ENCODE measurements at regions of chr11 and their contacts with region 1.

Region 1: GRCh38 chr11:82775736-82776346 is 42.2 kb upstream of the FAM181B start:
- H3K4me3 ChIP-seq: no peak overlapping the region
- H3K27ac ChIP-seq: no peak overlapping the region
- H3K4me1 ChIP-seq: no peaks in the 10 kb centered on the region
- CTCF ChIP-seq: no peak

Region 2: GRCh38 chr11:82653752-82654151 is 122.1 kb before region 1 on chr11:
- CTCF ChIA-PET with region 1: no interaction called
- POLR2A ChIA-PET with region 1: no interaction called
- H3K4me3 ChIP-seq: no peak overlapping the region
- H3K27ac ChIP-seq: no peak overlapping the region
- H3K4me1 ChIP-seq: no peaks in the 10 kb centered on the region
- CTCF ChIP-seq: no peak

Region 3: DNA sequence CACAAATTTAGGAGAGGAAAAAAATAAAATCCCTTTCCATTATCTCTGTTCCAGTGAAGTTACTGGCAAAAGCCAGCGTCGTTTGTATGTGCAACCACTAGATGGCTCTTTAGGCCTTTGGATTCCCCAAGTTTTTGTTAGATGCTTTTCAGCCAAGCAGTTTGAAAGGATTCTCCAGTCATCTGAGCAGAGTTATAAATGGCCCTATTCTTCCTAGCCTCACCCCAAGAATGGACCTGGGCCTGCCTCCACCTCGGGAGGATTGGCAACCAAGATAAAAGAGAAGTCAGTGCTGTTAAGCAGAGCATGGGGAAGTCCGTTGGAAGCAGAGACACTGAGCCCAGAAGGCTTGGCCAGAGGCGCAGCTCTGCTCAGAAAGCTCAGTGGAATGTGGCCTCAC is 57.5 kb before region 1 on chr11:
- CTCF ChIA-PET with region 1: interaction called, 10 read pairs
- POLR2A ChIA-PET with region 1: no interaction called
- H3K4me3 ChIP-seq: no peak overlapping the region
- H3K27ac ChIP-seq: no peak overlapping the region
- H3K4me1 ChIP-seq: no peaks in the 10 kb centered on the region
- CTCF ChIP-seq: no peak

Region 4: DNA sequence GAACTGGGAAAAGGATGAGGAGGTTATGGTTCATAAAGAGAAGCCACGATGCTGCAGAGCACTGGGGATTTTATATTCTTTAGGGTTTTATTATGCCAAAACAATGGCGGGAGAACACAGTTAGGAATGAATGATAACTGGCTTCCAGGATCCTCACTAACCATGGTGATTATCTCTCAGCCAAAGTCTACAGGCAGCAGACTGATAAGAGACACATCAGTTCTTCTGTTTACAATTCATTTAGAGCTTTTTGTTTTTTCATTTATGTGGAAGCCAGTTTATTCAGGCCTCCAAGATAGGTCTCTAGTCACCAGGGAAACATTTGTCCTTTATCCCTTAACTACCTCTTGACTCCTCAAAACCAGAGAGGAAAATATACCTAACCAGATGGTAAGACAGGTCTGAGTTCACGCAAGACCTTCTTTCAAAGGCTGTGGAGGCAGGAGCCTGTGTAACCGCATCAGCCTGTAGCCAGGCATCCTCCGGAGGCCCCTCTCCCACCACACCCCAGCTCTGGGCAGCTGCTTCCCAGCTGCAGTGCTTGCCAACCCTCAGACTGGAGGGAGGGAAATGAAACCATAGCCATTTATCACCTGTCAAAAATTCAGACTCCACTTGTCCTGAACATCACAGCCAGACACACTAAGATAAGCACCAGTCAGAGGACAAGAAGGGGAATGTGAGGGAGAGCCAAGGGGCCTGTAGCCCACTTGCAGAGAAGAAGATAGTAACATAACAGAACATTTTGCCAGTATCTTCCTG is 15.1 kb after region 1 on chr11:
- CTCF ChIA-PET with region 1: interaction called, 47 read pairs
- POLR2A ChIA-PET with region 1: no interaction called
- H3K4me3 ChIP-seq: no peak overlapping the region
- H3K27ac ChIP-seq: no peak overlapping the region
- H3K4me1 ChIP-seq: no peaks in the 10 kb centered on the region
- CTCF ChIP-seq: no peak

Region 5: GRCh38 chr11:82802710-82803109 is 26.9 kb after region 1 on chr11:
- CTCF ChIA-PET with region 1: interaction called, 11 read pairs
- POLR2A ChIA-PET with region 1: no interaction called
- H3K4me3 ChIP-seq: no peak overlapping the region
- H3K27ac ChIP-seq: no peak overlapping the region
- H3K4me1 ChIP-seq: no peaks in the 10 kb centered on the region
- CTCF ChIP-seq: no peak

Region 6: GRCh38 chr11:82858556-82859091 is 82.8 kb after region 1 on chr11:
- CTCF ChIA-PET with region 1: interaction called, 15 read pairs
- POLR2A ChIA-PET with region 1: no interaction called
- H3K4me3 ChIP-seq: no peak overlapping the region
- H3K27ac ChIP-seq: no peak overlapping the region
- H3K4me1 ChIP-seq: peaks cover 2% of the 10 kb centered on the region; the same call in 1 of the 2 replicates
- CTCF ChIP-seq: no peak

Region 7: GRCh38 chr11:82867495-82868082 is 91.7 kb after region 1 on chr11:
- CTCF ChIA-PET with region 1: interaction called, 40 read pairs
- POLR2A ChIA-PET with region 1: no interaction called
- H3K4me3 ChIP-seq: no peak overlapping the region
- H3K27ac ChIP-seq: no peak overlapping the region
- H3K4me1 ChIP-seq: no peaks in the 10 kb centered on the region; the same call in 1 of the 2 replicates
- CTCF ChIP-seq: no peak

Measured in HEK293 (cell line).